ENCODE measurements at regions of chr5 and their contacts with region 1.

Region 1: GRCh38 chr5:169670769-169671525 is 33.9 kb downstream of the DOCK2 start:
- DNase-seq: peak; percentile 70
- CTCF ChIP-seq: no peak

Region 2: GRCh38 chr5:169647566-169647965 is 23.4 kb before region 1 on chr5:
- CTCF ChIA-PET with region 1: interaction called, 12 read pairs
- POLR2A ChIA-PET with region 1: no interaction called
- DNase-seq: peak; percentile 48
- CTCF ChIP-seq: no peak

Region 3: GRCh38 chr5:169656125-169656901 is 14.6 kb before region 1 on chr5:
- CTCF ChIA-PET with region 1: interaction called, 10 read pairs
- POLR2A ChIA-PET with region 1: no interaction called
- DNase-seq: peak; percentile 72
- CTCF ChIP-seq: no peak

Region 4: GRCh38 chr5:169682026-169682425 is 11.1 kb after region 1 on chr5:
- CTCF ChIA-PET with region 1: interaction called, 16 read pairs
- POLR2A ChIA-PET with region 1: no interaction called
- DNase-seq: no peak
- CTCF ChIP-seq: no peak

Region 5: DNA sequence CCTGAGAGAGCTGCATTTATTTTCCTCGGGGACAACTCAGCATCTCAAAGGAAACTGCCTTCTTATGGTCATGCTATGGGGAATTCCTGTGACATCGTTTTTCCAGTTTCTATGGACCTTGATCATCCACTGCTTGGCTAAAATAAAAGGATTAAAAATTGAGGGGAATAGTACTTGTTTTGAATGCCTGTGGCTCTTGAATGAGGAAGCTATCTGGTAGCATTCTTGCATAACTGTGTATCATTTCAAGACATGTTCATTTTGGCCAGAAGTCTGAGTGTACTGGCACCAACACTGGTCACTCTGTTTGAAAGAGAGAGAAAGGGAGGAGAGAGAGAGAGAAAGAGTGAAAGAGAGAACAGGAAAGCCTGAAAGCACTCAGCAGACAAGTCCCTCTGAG is 82.8 kb after region 1 on chr5:
- CTCF ChIA-PET with region 1: no interaction called
- POLR2A ChIA-PET with region 1: no interaction called
- DNase-seq: no peak
- CTCF ChIP-seq: no peak

Region 6: GRCh38 chr5:170056561-170057267 is 385.8 kb after region 1 on chr5:
- CTCF ChIA-PET with region 1: no interaction called
- POLR2A ChIA-PET with region 1: no interaction called
- DNase-seq: no peak
- CTCF ChIP-seq: no peak